Mucosa of descending colon (tissue), 3 donors: ENCODE measurements at regions of chr14 and their contacts with region 1.

Region 1: DNA sequence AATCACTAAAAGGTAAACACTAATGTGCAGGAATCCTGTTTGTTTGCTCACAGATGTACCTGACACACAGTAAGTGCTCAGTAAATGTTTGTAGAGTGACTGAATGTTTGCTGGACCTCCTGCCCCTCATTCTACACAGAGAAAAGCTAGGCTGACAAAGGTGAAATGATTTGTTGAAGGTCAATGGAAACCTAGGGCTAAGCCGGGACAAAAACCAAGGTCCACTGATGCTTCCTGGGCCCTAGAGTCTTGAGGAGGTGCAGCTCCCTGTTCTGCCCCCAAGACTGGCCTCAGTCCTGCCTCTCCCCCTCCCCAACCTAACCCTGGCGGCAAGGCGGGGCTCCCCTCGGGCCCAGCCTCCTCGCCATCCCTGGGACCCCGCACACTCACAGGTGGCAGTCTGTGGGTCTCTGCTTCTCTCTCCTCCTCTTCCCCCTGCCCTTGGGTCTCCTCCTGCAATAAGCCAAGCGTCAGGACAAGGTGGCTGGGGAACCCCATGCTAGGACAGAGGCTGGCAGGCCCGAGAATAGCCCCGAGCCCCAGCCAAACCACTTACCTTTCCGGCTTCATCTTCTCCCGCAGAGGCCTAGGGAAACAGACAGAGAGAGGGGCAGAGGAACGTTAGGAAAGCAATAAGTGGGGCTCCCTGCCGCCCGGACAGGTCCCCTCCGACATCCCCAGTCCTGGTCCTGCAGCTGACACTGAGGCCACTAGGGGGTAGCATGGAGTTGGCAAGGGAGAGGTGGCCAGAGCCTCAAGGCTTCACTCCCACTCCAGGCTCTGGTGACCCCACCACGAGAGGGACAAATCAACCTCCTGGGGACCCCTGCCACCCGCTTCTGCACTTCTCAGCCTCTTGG is 9.3 kb downstream of the PGF start:
- DNase-seq: peak; percentile 71 to 88 (median 81)
- ATAC-seq: peak; percentile 77
- H3K4me3 ChIP-seq: no peak overlapping the region
- H3K4me1 ChIP-seq: peaks cover 9% of the 10 kb centered on the region
- CTCF ChIP-seq: peak; percentile 91

Region 2: DNA sequence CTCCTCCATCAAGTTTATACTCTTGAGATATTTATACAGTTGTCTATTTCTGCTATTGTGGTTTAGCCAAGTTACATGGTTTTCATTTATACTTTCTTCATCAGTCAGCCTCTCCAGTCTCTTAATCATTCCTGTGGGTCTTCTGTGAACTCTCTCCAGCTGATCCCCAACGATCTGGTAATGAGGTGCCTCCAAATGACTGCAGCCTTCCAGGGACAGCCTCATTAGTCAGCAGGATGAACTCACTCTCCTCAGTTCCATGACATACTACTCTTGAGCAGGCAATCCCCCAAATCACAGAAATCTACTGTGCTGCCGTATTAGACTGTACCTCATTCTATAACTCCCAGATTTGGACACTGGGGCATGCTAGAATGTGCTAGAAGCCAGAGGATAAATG is 248.5 kb before region 1 on chr14:
- intact Hi-C with region 1: no loop called
- DNase-seq: no peak
- ATAC-seq: no peak
- H3K4me3 ChIP-seq: no peak overlapping the region
- H3K4me1 ChIP-seq: no peaks in the 10 kb centered on the region
- CTCF ChIP-seq: no peak

Region 3: GRCh38 chr14:75088574-75089373 is 142.7 kb after region 1 on chr14:
- intact Hi-C with region 1: loop called in 1 of 2 experiments (anchors 5 kb)
- DNase-seq: peak in 1 of 3 donors; percentile 87
- ATAC-seq: peak; percentile 81
- H3K4me3 ChIP-seq: no peak overlapping the region
- H3K4me1 ChIP-seq: no peaks in the 10 kb centered on the region
- CTCF ChIP-seq: peak; percentile 47

Region 4: GRCh38 chr14:75323571-75323970 is 377.5 kb after region 1 on chr14:
- intact Hi-C with region 1: no loop called
- DNase-seq: no peak
- ATAC-seq: no peak
- H3K4me3 ChIP-seq: no peak overlapping the region
- H3K4me1 ChIP-seq: no peaks in the 10 kb centered on the region
- CTCF ChIP-seq: no peak